CD4-positive, alpha-beta memory T cell (primary cell): ENCODE measurements at regions of chr1 and their contacts with region 1.

Region 1: DNA sequence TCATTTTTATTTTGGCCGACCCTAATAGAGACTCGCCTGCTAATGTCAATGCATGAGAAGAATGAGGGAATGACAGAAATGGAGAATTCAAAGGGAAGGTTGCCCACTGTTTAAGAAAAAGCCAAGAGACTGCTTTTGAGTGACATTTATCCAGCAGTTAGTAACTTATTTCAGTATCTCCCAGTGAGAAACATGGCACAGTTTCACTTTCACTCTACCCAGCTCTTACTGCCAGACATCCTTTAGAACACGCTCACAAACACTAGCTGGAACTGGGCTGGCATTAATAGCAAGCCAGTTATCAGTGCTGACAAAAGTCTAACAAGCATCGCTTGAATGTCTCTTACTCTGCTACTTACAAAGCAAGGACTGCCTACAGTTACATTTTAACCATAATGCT is 8.5 kb downstream of the GGPS1 start:
- DNase-seq: peak; percentile 36 to 56 (median 50)
- H3K4me3 ChIP-seq: peak overlapping the region in 1 of 2 donors; percentile 20
- H3K4me3 Mint-ChIP-seq: peak overlapping the region; percentile 70 to 87 (median 79)
- H3K27ac ChIP-seq: peak overlapping the region; percentile 49
- H3K27ac Mint-ChIP-seq: peak overlapping the region; percentile 62 to 95 (median 89)
- H3K4me1 ChIP-seq: peaks cover 40% of the 10 kb centered on the region
- H3K4me1 Mint-ChIP-seq: peaks cover 20 to 31% (median 21%) of the 10 kb centered on the region in 4 donors
- H3K27me3 ChIP-seq: no peaks in the 10 kb centered on the region
- H3K27me3 Mint-ChIP-seq: no peaks in the 10 kb centered on the region

Region 2: GRCh38 chr1:235100194-235100772 is 236.6 kb before region 1 on chr1:
- CTCF ChIA-PET with region 1: no interaction called
- POLR2A ChIA-PET with region 1: interaction called, 3 read pairs
- intact Hi-C with region 1: loop called (anchors 5 kb)
- DNase-seq: no peak
- H3K4me3 ChIP-seq: no peak overlapping the region
- H3K4me3 Mint-ChIP-seq: no peak overlapping the region
- H3K27ac ChIP-seq: no peak overlapping the region
- H3K27ac Mint-ChIP-seq: no peak overlapping the region
- H3K4me1 ChIP-seq: peaks cover 36% of the 10 kb centered on the region
- H3K4me1 Mint-ChIP-seq: peaks cover 21 to 36% (median 27%) of the 10 kb centered on the region in 4 donors
- H3K27me3 ChIP-seq: no peaks in the 10 kb centered on the region
- H3K27me3 Mint-ChIP-seq: peaks cover 0 to 1% of the 10 kb centered on the region in 2 donors